ENCODE measurements at regions of chr6 and their contacts with region 1.

Region 1: GRCh38 chr6:89792873-89793272 is 26.7 kb downstream of the MDN1 start:
- DNase-seq: peak; percentile 59
- H3K4me3 Mint-ChIP-seq: no peak overlapping the region
- H3K27ac Mint-ChIP-seq: peak overlapping the region; percentile 91
- H3K4me1 Mint-ChIP-seq: peaks cover 34% of the 10 kb centered on the region
- H3K27me3 Mint-ChIP-seq: no peaks in the 10 kb centered on the region

Region 2: DNA sequence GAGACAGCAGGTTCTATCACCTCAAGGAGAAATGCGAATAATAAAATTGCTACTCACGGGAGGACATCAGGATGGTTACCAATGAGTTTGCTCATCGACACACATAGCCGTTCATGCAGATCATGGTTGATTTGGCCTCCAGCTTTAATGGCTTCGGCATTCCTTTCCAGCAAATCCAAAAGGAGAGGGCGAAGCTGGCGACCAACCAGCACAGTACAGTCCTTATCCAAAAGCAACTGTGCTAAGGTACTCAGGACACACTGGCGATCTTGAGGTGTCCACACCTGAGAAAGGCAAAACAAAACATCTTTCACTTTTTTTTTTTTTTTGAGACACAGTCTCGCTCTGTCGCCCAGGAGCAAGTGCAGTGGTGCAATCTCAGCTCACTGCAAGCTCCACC is 10.4 kb after region 1 on chr6:
- CTCF ChIA-PET with region 1: interaction called, 18 read pairs
- DNase-seq: no peak
- H3K4me3 Mint-ChIP-seq: no peak overlapping the region
- H3K27ac Mint-ChIP-seq: no peak overlapping the region
- H3K4me1 Mint-ChIP-seq: no peaks in the 10 kb centered on the region
- H3K27me3 Mint-ChIP-seq: no peaks in the 10 kb centered on the region